ENCODE measurements at regions of chr10 and their contacts with region 1.

Region 1: GRCh38 chr10:69786791-69787190 is 14.9 kb upstream of the COL13A1 start:
- DNase-seq: no peak
- H3K4me3 ChIP-seq: no peak overlapping the region
- CTCF ChIP-seq: peak; percentile 48

Region 2: GRCh38 chr10:69248117-69248730 is 538.6 kb before region 1 on chr10:
- CTCF ChIA-PET with region 1: no interaction called
- POLR2A ChIA-PET with region 1: no interaction called
- DNase-seq: no peak
- H3K4me3 ChIP-seq: no peak overlapping the region
- CTCF ChIP-seq: no peak

Region 3: DNA sequence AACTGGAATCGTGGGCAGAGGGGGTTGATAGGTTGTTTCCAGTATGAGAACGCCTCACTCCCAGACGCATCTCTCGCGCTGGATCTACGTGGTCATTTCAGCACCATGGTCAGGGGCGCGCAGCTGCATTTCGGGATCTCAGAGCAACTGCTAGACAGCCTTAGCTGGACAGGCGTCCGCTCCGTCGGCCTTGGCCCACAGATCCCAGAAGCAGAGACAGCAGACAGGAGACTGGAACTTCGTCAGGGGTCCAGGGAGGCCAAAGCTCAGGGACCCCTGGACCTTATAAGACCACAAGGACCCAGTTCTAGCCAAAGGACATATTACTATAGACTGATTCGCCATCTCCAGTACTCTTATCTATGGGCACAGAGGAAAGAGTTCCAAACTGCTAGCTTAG is 218.9 kb before region 1 on chr10:
- CTCF ChIA-PET with region 1: no interaction called
- POLR2A ChIA-PET with region 1: no interaction called
- DNase-seq: no peak
- H3K4me3 ChIP-seq: no peak overlapping the region
- CTCF ChIP-seq: no peak

Region 4: GRCh38 chr10:69633673-69634635 is 152.8 kb before region 1 on chr10:
- CTCF ChIA-PET with region 1: no interaction called
- POLR2A ChIA-PET with region 1: no interaction called
- DNase-seq: no peak
- H3K4me3 ChIP-seq: no peak overlapping the region
- CTCF ChIP-seq: no peak

Region 5: DNA sequence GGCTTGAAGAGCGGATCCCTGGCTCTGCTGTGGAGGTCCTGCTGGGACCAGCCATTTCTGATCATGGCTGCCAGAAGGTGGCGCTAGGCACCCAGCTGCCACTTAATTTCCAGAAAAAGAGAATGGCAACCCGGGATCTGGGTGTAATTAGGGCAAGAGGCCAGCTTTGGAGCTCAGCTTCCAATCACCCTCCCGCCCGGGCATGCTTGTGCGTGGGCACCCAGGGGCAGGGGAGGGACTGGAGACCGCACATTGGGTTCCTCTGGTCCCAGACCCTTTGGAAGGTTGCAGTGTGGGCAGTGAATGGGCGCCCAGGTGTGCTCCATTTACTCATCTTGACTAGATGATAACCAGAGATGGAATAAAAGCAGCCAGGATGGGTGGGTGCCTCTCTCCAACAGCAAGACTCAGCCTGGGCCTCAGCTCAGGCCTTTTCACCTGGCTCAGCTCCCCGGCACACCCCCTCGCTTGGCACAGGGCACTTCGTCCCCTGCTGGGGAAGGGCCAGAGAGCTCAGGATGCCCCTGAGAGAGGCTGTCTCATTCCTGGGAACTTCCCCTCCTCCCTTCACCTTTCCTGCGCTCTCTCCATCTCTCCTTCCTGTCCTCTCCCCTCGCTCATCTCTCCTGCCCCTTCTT is 142.0 kb before region 1 on chr10:
- CTCF ChIA-PET with region 1: interaction called, 15 read pairs
- POLR2A ChIA-PET with region 1: no interaction called
- DNase-seq: no peak
- H3K4me3 ChIP-seq: no peak overlapping the region
- CTCF ChIP-seq: peak; percentile 80

Region 6: GRCh38 chr10:69728335-69728870 is 58.4 kb before region 1 on chr10:
- CTCF ChIA-PET with region 1: no interaction called
- POLR2A ChIA-PET with region 1: no interaction called
- DNase-seq: no peak
- H3K4me3 ChIP-seq: no peak overlapping the region
- CTCF ChIP-seq: no peak

Region 7: DNA sequence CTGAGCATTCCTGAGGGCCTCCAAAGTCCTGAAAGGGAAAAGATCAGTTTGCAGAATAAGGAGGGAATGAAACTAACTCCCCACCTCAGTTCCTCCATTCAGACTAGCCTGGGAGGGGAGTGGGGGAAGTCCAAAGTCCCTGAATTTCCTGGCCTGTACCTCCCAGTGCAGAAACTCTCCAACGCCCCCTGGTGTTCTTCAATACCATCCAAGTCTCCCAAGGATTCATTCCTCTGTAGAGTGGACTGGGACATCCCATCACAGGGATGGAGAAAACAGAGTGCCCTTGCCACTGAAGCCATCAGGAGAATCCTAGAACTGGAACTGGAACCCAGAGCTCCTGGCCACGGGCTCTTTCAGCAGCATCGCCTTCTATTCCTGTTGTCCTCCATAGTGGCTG is 13.3 kb after region 1 on chr10:
- CTCF ChIA-PET with region 1: interaction called, 156 read pairs
- POLR2A ChIA-PET with region 1: no interaction called
- DNase-seq: peak; percentile 7
- H3K4me3 ChIP-seq: no peak overlapping the region
- CTCF ChIP-seq: peak; percentile 83

Region 8: DNA sequence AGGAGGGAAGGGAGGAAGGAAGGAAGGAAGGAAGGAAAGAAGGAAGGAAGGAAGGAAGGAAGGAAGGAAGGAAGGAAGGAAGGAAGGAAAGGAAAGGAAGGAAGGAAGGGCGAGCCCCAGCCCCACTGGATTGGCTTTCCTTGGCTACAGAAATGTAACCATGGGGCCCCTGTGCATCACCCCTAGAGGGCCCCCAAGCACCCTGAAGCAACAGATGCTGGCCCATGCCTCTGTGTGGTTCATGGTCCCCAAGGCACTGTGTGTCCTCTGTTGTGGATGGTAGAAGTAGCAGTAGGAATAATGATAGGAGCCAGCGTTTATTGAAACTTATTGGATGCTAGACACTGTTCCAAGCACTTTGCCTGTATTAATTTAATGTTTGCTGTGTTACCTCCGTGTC is 149.3 kb after region 1 on chr10:
- CTCF ChIA-PET with region 1: interaction called, 13 read pairs
- POLR2A ChIA-PET with region 1: no interaction called
- DNase-seq: no peak
- H3K4me3 ChIP-seq: no peak overlapping the region
- CTCF ChIP-seq: peak; percentile 3

Region 9: GRCh38 chr10:69957886-69958555 is 171.2 kb after region 1 on chr10:
- CTCF ChIA-PET with region 1: interaction called, 145 read pairs
- POLR2A ChIA-PET with region 1: no interaction called
- DNase-seq: no peak
- H3K4me3 ChIP-seq: no peak overlapping the region
- CTCF ChIP-seq: peak; percentile 77

Region 10: GRCh38 chr10:70115948-70116682 is 329.3 kb after region 1 on chr10:
- CTCF ChIA-PET with region 1: interaction called, 13 read pairs
- POLR2A ChIA-PET with region 1: no interaction called
- DNase-seq: no peak
- H3K4me3 ChIP-seq: no peak overlapping the region
- CTCF ChIP-seq: peak; percentile 71

Measured in AG04449 (cell line).